Heart right ventricle (tissue), 16 donors: ENCODE measurements at regions of chr5 and their contacts with region 1.

Region 1: GRCh38 chr5:72244862-72245371 is 75.1 kb downstream of the MRPS27 start:
- DNase-seq: peak in 1 of 2 donors; percentile 12
- ATAC-seq: peak in 7 of 8 donors; percentile 66 to 88 (median 77)
- H3K4me3 ChIP-seq: no peak overlapping the region
- H3K27ac ChIP-seq: peak overlapping the region in 8 of 10 donors; percentile 4 to 69 (median 52)
- H3K4me1 ChIP-seq: peaks cover 10 to 55% (median 50%) of the 10 kb centered on the region in 9 donors
- H3K27me3 ChIP-seq: no peaks in the 10 kb centered on the region
- CTCF ChIP-seq: peak in 8 of 9 donors; percentile 17 to 56 (median 41)

Region 2: GRCh38 chr5:72107131-72107900 is 137.6 kb before region 1 on chr5 and contains the start of gene MAP1B:
- intact Hi-C with region 1: no loop called
- DNase-seq: peak; percentile 61 to 71
- ATAC-seq: peak; percentile 55 to 87 (median 80)
- H3K4me3 ChIP-seq: peak within 1 kb of the TSS; percentile 74 to 96 (median 86)
- H3K27ac ChIP-seq: peak within 1 kb of the TSS; percentile 81 to 94 (median 88)
- H3K4me1 ChIP-seq: peaks cover 0 to 38% (median 18%) of the 10 kb centered on the region in 9 donors
- H3K27me3 ChIP-seq: peaks cover 0 to 54% (median 0%) of the 10 kb centered on the region in 7 donors
- CTCF ChIP-seq: no peak
- total RNA-seq, gene MAP1B: 61.2 to 154 (median 104) TPM

Region 3: GRCh38 chr5:72307968-72308852 is 63.3 kb after region 1 on chr5:
- intact Hi-C with region 1: loop called in 2 of 10 experiments (anchors 5 to 10 kb)
- DNase-seq: peak; percentile 97 to 98
- ATAC-seq: peak; percentile 98 to 100 (median 99)
- H3K4me3 ChIP-seq: peak overlapping the region; percentile 44 to 82 (median 70)
- H3K27ac ChIP-seq: peak overlapping the region; percentile 68 to 97 (median 94)
- H3K4me1 ChIP-seq: peaks cover 0 to 28% (median 12%) of the 10 kb centered on the region in 9 donors
- H3K27me3 ChIP-seq: no peaks in the 10 kb centered on the region
- CTCF ChIP-seq: peak; percentile 84 to 98 (median 93)

Region 4: DNA sequence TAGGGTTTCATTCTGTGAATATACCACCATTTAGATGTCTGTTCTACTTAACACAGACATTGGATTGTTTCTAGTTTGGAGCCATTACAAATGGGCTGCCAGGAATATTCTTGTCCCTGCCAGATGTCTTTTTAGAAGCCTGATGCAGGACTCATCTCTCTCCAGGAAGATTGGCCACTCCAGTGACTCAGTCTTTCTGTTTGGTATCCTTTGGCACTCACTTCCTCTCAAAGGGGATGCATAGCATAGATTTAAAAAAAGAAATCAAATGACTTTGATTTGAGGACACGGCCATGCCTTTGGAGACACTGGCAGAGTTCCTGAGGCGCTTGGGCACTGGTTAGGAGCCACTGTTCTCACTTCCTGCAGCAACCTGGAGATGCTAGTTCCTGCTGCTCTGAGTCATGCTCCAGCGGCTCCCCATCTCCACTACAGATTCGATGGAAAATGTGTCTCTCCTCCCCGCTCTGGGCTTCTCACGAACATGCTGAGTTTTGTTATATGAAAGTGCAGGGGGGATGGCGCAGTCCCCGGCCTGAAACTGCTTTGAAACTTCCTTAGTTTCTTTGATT is 265.8 kb after region 1 on chr5:
- intact Hi-C with region 1: no loop called
- DNase-seq: peak in 1 of 2 donors; percentile 23
- ATAC-seq: peak in 4 of 8 donors; percentile 27 to 75 (median 66)
- H3K4me3 ChIP-seq: no peak overlapping the region
- H3K27ac ChIP-seq: peak overlapping the region in 8 of 10 donors; percentile 15 to 92 (median 80)
- H3K4me1 ChIP-seq: peaks cover 10 to 61% (median 40%) of the 10 kb centered on the region in 9 donors
- H3K27me3 ChIP-seq: no peaks in the 10 kb centered on the region
- CTCF ChIP-seq: no peak

Region 5: GRCh38 chr5:72883864-72884263 is 638.9 kb after region 1 on chr5:
- intact Hi-C with region 1: no loop called
- DNase-seq: no peak
- ATAC-seq: no peak
- H3K4me3 ChIP-seq: no peak overlapping the region
- H3K27ac ChIP-seq: no peak overlapping the region
- H3K4me1 ChIP-seq: peaks cover 0 to 9% (median 4%) of the 10 kb centered on the region in 9 donors
- H3K27me3 ChIP-seq: no peaks in the 10 kb centered on the region
- CTCF ChIP-seq: no peak